Heart left ventricle (tissue), 16 donors: ENCODE measurements at regions of chr7 and their contacts with region 1.

Region 1: GRCh38 chr7:152675759-152676636 is at the start of gene XRCC2:
- DNase-seq: peak; percentile 89 to 95 (median 92)
- ATAC-seq: peak; percentile 92 to 100 (median 100)
- H3K4me3 ChIP-seq: peak within 1 kb of the TSS; percentile 15 to 85 (median 66)
- H3K27ac ChIP-seq: peak within 1 kb of the TSS; percentile 39 to 92 (median 82)
- H3K4me1 ChIP-seq: peaks cover 0 to 16% (median 9%) of the 10 kb centered on the region in 12 donors
- H3K27me3 ChIP-seq: no peaks in the 10 kb centered on the region
- CTCF ChIP-seq: no peak
- POLR2A ChIP-seq: peak in 1 of 2 donors; percentile 85
- total RNA-seq, gene XRCC2: 0.15 to 0.85 (median 0.38) TPM

Region 2: DNA sequence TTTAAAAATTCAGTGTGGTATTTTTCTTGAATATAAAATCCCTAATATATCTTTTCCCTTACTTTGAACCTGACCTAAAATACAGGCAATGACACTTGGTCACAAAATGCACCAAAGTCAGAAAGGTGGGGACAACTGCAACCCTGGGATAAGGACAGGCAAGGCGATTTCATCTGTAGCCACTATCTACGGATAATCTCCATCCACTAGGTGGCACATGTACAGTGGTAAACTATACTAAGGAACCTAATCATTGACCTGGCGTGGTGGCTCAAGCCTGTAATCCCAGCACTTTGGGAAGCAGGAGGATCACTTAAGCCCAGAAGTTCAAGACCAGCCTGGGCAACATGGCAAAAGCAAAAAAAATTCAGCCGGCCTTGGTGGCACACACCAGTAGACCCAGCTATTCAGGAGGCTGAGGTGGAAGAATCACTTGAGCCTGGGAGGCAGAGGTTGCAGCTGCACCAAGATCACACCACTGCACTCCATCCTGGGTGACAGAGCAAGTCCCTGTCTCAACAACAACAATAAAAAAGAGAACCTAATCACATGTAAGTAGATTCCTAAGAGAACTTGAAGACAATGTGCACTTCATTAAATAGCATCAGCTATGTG is 339.1 kb before region 1 on chr7:
- intact Hi-C with region 1: loop called in 1 of 10 experiments (anchors 10 kb)
- DNase-seq: no peak
- ATAC-seq: peak in 3 of 4 donors; percentile 64 to 71 (median 70)
- H3K4me3 ChIP-seq: peak overlapping the region in 2 of 12 donors; percentile 38 to 44
- H3K27ac ChIP-seq: peak overlapping the region in 2 of 12 donors; percentile 41 to 61
- H3K4me1 ChIP-seq: peaks cover 4 to 69% (median 46%) of the 10 kb centered on the region in 12 donors
- H3K27me3 ChIP-seq: no peaks in the 10 kb centered on the region
- CTCF ChIP-seq: peak in 11 of 12 donors; percentile 37 to 58 (median 47)
- POLR2A ChIP-seq: no peak

Region 3: DNA sequence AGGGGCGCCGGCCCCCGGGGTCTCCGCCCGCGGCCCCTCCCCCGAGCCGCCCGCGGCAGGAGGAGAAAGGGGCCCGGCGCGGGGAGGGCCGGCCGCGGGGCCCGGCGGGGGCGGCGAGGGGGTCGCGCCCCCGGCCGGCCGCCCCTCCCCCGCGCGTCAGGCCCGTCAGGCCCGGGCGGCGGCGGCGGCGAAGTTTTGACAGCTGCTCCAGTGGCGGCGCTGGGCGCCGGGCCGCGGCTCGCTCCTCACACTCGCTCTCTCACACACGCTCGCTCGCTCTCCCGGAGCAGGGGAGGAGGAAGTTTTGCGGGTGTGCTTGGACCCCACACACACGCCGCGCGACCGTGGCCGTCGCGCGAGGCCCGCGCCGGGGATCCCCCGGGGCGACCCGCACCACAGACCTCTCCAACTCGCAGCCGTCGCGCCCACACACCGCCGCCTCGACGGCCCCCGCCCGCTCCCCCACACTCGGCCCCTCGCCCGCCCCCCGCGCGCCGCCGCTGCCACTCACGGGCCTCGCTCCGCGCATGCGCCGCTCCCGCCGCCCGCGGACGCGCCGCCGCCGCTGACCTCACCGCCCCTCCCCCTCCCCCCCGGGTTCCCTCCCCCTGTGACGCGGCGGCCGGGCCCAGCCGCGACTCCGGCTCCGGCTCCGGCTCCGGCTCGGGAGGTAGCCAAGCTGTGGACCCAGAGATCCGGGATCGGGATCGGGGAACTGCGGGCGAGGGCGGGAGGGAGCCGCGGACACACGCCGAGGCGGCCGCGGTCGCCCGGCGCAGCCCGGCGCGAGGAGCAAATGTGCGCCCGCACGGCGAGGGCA is 239.7 kb before region 1 on chr7:
- intact Hi-C with region 1: loop called in 2 of 10 experiments (anchors 10 kb)
- DNase-seq: peak; percentile 95 to 96 (median 95)
- ATAC-seq: peak; percentile 83 to 93 (median 90)
- H3K4me3 ChIP-seq: peak overlapping the region; percentile 39 to 98 (median 76)
- H3K27ac ChIP-seq: peak overlapping the region; percentile 92 to 100 (median 97)
- H3K4me1 ChIP-seq: peaks cover 0 to 30% (median 24%) of the 10 kb centered on the region in 12 donors
- H3K27me3 ChIP-seq: no peaks in the 10 kb centered on the region
- CTCF ChIP-seq: no peak
- POLR2A ChIP-seq: peak in 1 of 2 donors; percentile 56

Region 4: DNA sequence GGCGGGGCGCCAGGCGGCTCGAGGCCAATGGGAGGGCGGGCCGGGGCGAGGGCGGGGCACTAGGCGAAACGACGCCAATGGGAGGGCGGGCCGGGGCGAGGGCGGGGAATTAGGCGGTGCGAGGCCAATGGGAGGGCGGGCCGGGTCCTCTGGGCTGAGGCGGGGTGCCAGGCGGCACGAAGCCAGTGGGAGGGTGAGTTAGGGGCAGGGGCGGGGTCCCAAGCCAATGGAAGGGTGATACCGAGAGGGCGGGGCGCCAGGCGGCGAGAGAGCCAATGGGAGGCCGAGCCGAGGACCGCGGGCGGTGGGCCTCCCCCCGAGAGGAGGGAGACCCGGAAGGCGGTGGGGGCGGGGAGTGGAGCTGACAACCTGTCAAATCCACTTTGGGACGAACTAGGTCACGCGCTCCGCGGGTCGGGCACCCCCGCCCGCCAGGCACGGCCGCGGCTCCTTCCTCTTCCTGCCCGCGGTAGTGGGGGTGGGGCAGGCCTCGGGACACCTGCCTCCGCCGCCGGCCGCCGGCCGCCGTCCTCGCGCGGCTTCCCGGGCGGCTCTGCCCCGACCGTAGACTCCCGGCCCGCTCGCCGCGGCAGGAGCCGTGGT is 212.2 kb before region 1 on chr7:
- intact Hi-C with region 1: loop called in 6 of 10 experiments (anchors 1 to 10 kb)
- DNase-seq: peak; percentile 100
- ATAC-seq: peak; percentile 95 to 99 (median 98)
- H3K4me3 ChIP-seq: peak overlapping the region; percentile 91 to 99 (median 96)
- H3K27ac ChIP-seq: peak overlapping the region; percentile 99 to 100 (median 100)
- H3K4me1 ChIP-seq: peaks cover 0 to 33% (median 7%) of the 10 kb centered on the region in 12 donors
- H3K27me3 ChIP-seq: no peaks in the 10 kb centered on the region
- CTCF ChIP-seq: no peak
- POLR2A ChIP-seq: peak in 1 of 2 donors; percentile 87

Region 5: GRCh38 chr7:152759949-152760853 is 84.2 kb after region 1 on chr7:
- intact Hi-C with region 1: loop called in 2 of 10 experiments (anchors 5 kb)
- DNase-seq: peak in 4 of 5 donors; percentile 18 to 64 (median 38)
- ATAC-seq: peak in 3 of 4 donors; percentile 43 to 62 (median 58)
- H3K4me3 ChIP-seq: peak overlapping the region; percentile 73 to 100 (median 94)
- H3K27ac ChIP-seq: peak overlapping the region; percentile 71 to 96 (median 91)
- H3K4me1 ChIP-seq: peaks cover 0 to 19% (median 11%) of the 10 kb centered on the region in 12 donors
- H3K27me3 ChIP-seq: no peaks in the 10 kb centered on the region
- CTCF ChIP-seq: peak in 1 of 12 donors; percentile 1
- POLR2A ChIP-seq: no peak